Activated naive CD4-positive, alpha-beta T cell treated with anti-CD3 and anti-CD28 coated beads for 36 hours (primary cell): ENCODE measurements at regions of chr11 and their contacts with region 1.

Region 1: DNA sequence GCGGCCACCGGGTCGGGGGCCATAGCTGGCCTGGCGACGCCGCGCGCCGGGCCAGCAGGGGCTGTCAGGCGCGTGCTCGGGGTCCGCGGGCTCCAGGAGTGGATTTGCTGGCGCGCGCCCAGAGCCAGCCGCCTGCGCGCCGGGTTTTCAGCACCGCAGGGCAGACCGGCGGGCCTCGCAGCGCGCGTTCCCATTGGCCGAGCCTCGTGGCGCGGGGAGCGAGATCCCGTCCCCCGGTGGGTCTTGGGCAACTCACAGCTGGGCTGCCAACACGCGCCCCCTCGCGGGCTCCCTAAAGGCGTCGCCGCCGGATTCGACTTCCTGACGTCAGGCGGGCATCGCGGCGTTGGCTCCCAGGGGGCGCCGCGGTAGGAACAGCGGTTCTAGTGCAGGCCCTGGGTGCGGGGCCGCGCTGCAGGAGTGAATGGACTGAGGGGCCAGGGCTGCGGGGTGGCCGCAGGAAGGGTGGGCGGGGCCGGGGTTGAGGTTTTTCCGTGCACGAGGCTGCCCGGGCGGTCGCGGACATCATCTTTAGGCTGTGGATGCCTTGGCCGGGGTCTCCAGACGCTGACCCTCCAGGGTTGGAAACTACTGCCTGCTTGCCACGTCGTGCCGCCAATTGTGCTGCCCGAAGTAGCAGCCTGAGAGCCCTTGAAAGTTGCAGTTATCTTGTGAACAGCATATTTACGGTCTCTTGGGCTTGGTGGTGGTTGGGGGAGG is at the start of gene FADS1:
- DNase-seq: peak; percentile 90
- H3K4me3 Mint-ChIP-seq: peak within 1 kb of the TSS; percentile 91
- H3K27ac Mint-ChIP-seq: no peak within 1 kb of the TSS
- H3K4me1 Mint-ChIP-seq: peaks cover 10% of the 10 kb centered on the region
- H3K27me3 Mint-ChIP-seq: peaks cover 26% of the 10 kb centered on the region
- total RNA-seq, gene FADS1: 12.1 to 12.8 TPM

Region 2: DNA sequence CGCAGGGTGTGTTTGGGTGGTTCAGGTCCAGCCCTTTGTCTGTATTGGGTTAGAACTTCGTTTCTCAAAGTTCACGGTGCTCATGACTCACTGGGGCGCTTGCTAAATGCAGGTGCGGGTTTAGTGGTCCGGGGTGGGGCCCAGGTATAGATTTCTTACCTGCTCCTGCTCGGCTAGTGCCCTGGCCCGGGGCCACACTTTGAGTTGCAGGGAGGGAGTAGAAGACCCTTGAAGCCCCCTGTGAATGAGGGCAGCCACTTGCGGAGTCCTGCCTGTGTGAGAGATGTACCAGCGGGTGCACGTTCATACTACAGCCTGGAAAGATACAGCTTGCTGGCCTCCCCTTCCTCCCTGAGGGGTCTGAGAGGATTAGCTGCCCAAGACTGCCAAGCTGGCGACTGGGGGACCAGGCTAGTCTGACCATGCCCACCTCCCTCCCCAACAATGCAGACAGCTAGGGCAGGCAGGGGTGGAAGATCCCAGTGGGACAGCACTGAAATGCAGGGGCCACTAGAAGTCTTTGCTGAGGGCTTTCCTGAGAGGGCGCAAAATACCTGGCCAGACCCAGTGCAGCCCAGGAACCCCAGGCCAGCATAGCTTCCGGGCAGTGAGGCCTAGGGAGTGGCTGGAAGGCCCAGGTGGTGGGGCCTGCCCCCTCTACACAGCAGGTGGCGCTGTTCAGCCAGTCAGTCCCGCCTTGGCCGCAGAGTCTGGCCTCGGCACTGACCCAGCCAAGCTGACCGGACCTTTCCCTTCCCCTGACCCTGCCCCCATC is 69.5 kb before region 1 on chr11:
- CTCF ChIA-PET with region 1: no interaction called
- intact Hi-C with region 1: loop called (anchors 2 kb)
- DNase-seq: peak; percentile 57
- H3K4me3 Mint-ChIP-seq: no peak overlapping the region
- H3K27ac Mint-ChIP-seq: no peak overlapping the region
- H3K4me1 Mint-ChIP-seq: peaks cover 4% of the 10 kb centered on the region
- H3K27me3 Mint-ChIP-seq: peaks cover 21% of the 10 kb centered on the region

Region 3: DNA sequence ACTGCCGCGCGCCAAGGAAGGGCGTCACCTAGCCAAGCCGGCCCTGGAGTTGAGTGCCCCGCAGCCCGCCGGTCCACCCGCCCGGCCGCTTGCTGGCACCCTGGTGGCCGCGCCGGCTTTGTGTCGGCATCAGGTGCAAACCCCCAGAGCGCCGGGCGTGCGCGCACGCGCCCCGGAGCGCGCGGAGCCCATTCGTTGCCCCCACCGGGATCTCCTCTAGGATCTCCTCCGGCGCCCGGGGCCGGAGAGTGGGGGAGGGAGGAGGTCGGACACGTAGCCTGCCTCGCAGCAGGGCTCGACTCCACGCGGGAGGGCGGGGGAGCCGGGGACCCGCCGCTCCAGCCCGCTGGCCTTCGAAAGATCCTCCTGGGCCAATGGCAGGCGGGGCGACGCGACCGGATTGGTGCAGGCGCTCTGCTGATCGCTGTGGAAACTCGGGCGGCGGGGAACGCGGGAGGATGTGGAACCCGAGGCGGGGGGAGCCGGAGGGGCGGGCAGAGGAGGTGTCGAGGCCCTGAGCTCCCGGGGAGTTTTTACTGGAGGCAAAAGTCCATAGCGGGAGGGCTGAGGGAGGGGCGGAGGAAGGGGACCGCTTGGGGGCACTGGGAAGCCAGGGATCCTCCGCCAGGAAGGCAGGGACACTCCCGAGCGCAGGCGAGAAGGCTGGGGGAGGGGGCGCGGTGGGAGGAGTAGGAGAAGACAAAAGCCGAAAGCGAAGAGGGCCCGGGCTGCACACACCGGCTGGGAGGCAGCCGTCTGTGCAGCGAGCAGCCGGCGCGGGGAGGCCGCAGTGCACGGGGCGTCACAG is 10.9 kb after region 1 on chr11 and contains the start of gene FADS2:
- CTCF ChIA-PET with region 1: interaction called, 13 read pairs
- intact Hi-C with region 1: loop called (anchors 1 kb)
- DNase-seq: peak; percentile 90
- H3K4me3 Mint-ChIP-seq: peak within 1 kb of the TSS; percentile 85
- H3K27ac Mint-ChIP-seq: peak within 1 kb of the TSS; percentile 77
- H3K4me1 Mint-ChIP-seq: peaks cover 18% of the 10 kb centered on the region
- H3K27me3 Mint-ChIP-seq: peaks cover 40% of the 10 kb centered on the region
- total RNA-seq, gene FADS2: 32.1 to 34.1 TPM

Region 4: DNA sequence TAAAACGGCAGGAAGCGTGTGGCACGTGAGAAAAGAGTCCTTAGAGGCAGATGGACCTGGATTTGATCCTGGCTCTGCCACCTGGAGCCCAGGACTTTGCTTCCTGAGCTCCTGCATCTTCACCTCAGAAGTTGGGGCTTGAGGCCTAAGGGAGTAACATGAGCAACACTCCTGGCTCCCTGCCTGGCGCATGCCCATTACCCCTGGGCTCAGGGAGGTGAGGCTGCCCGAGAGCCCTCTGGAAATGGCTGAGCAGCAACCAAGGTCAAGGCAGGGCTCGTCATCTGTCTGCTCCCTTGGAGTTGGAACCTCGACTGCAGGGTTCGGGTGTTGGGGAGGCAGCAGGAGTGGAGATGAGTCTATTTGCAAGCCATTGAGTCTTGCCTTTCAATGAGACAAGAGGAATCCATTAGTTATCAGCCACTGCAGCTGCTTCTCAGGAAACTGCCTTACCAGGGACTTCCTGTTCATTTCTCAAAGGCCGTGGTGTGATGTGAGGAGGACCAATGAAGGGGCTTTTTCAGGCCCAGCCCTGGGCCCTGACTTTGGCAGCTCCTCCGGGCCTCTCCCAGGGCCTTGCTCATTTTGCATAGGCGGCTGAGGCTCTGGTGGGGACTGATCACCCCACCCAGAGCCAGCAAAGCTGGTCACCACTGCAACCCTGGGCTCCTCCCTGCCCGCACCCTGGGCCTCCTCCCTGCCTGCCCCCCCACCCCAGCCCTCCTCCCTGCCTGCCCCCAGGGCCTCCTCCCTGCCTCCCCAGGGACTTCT is 17.6 kb after region 1 on chr11:
- CTCF ChIA-PET with region 1: interaction called, 7 read pairs
- intact Hi-C with region 1: loop called (anchors 2 kb)
- DNase-seq: peak; percentile 85
- H3K4me3 Mint-ChIP-seq: no peak overlapping the region
- H3K27ac Mint-ChIP-seq: peak overlapping the region; percentile 84
- H3K4me1 Mint-ChIP-seq: peaks cover 29% of the 10 kb centered on the region
- H3K27me3 Mint-ChIP-seq: peaks cover 17% of the 10 kb centered on the region

Region 5: DNA sequence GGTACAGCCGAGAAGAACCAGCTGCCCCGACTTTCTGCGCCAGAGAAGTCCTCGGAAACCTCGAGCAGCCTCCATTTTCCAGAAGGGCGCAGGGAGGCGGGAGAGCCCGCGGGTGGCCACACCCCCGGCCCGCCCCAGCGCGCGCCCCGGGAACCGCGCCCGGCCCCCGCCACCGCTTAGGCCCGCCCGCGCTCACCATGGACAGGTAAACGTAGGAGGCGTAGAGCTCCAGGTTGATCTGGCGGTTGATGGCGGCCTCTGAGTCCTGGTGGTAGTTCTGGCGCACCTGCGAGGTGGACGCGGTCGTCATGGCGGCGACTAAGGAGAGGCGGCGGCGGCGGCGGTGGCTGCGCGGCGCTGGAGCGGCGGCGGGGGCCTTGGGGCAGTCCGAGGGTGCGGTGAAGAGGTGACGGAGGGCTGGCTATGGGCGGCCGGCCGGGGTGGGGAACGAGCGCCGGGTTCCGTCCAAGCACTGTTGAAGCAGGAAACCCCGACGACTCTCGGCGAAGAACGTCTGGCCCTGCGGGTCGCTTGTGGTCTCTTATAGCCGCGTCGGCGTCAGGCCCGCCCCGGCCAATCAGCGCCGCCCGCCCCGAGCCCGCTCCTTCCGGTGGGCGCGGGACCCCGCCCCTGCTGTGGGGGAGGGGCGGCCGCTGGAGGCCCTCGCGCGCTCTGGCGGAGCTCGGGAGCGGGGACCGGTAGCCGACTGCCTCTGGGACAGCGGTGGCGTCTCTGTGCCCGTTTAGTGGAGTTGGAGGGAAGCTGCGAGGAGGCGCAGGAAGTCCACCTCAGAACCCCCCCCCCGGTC is 150.4 kb after region 1 on chr11 and contains the start of gene FTH1:
- CTCF ChIA-PET with region 1: no interaction called
- intact Hi-C with region 1: loop called (anchors 5 kb)
- DNase-seq: peak; percentile 85
- H3K4me3 Mint-ChIP-seq: peak within 1 kb of the TSS; percentile 93
- H3K27ac Mint-ChIP-seq: peak within 1 kb of the TSS; percentile 94
- H3K4me1 Mint-ChIP-seq: peaks cover 67% of the 10 kb centered on the region
- H3K27me3 Mint-ChIP-seq: no peaks in the 10 kb centered on the region
- total RNA-seq, gene FTH1: 1,302 to 1,352 TPM